ENCODE measurements at regions of chr7 and their contacts with region 1.

Region 1: GRCh38 chr7:112939574-112940314 is 146.9 kb downstream of the GPR85 start:
- DNase-seq: peak; percentile 100
- ATAC-seq: peak; percentile 100

Region 2: DNA sequence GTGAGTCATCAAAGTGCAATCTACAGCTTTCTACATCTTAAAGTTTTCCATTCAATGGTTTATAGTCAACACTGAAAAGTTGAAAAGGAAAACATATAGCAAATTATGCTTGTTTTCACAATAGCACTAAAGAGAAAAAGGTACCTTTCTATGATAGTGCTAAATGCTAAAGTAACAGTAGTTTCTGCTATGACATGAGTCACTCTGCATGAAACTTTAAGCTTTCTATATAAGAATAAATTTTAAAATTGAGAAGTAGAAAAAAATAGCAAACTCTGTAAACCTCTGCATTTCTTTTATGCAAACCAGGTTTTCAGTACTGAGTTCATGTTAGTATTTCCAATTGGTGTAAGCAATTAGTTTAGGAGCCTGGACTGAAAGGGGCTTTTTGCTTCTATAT is 118.4 kb before region 1 on chr7:
- intact Hi-C with region 1: no loop called
- DNase-seq: no peak
- ATAC-seq: no peak

Region 3: DNA sequence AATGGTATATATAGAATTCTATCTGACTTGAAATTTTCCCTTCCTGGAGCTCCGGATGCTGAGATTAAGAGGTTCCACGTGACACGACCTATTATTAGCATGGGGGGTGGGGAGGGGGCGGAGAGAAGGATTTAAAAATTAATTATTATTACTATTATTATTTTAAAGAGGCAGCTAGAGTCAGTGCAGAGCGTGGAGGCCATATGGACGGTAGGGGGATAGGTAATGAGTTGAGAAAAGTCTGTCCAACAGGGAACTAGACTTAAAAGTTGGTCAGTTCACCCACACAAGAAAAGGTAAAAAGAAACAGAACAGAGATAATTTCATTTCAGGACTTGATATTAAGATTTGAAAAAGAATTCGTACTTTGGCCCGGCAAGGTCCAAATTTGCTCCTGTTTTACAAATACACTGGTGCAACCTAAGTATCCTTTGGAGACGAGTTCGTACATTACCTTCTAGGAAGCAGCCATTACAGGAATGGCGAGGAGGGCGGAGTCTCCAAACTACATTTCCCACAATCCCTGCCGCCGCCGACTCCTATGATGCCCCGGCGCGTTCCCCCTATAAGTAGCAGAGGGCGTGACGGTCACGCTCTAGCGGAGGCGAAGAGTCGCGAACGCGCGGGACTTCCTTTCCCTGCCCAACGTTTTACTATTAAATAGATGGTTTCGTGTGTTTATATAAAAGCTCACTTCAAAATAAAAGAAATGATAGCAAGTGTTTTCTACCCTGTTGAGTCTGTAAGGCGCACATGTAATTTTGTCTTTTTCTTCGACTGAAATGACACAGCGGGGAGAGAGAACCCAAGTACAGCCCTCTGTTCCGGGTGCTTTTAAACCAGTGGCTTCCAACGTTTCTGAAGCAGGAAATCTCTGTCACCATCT is 178.6 kb after region 1 on chr7 and contains the start of gene SMIM30:
- intact Hi-C with region 1: loop called (anchors 5 kb)
- DNase-seq: peak; percentile 96
- ATAC-seq: peak; percentile 100
- total RNA-seq, gene SMIM30: 117 TPM